Right ventricle myocardium inferior (tissue), 1 donor: ENCODE measurements at regions of chr10 and their contacts with region 1.

Region 1: GRCh38 chr10:103396064-103396788 is at the starts of genes ATP5MK and PDCD11:
- DNase-seq: peak; percentile 99
- ATAC-seq: peak; percentile 100
- total RNA-seq, gene ATP5MK: 1,179 TPM
- total RNA-seq, gene PDCD11: 12.1 TPM

Region 2: DNA sequence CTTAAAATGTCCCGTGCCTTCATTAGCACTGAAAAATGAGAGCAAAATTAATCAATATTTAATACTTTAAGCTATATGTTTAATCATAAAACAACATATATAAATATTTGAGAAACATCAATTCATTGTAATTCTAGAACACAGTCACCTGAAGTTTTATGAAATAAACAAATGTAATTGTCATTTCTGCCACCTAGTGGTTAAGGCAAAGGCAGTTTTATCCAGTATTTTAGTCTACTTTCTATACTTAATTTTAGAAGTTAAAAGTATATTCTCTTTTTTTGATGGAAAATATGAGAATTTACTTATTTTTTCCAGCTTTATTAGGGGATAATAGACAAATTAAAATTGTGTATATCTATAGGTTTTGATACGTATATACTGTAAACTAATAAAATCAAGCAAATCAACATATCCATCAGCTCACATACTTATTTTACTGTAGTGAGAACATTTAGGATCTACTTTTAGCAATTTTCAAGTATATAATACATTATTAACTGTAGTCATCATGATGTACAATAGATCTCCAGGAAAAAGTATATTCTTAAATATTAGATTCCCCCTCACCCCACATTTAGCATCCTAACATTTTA is 62.2 kb before region 1 on chr10:
- intact Hi-C with region 1: no loop called
- DNase-seq: no peak
- ATAC-seq: no peak

Region 3: GRCh38 chr10:103367782-103368518 is 28.3 kb before region 1 on chr10 and contains the start of gene TAF5:
- intact Hi-C with region 1: loop called (anchors 1 kb)
- DNase-seq: peak; percentile 95
- ATAC-seq: peak; percentile 90
- total RNA-seq, gene TAF5: 3.1 TPM